Psoas muscle (tissue), 8 donors: ENCODE measurements at regions of chr22 and their contacts with region 1.

Region 1: DNA sequence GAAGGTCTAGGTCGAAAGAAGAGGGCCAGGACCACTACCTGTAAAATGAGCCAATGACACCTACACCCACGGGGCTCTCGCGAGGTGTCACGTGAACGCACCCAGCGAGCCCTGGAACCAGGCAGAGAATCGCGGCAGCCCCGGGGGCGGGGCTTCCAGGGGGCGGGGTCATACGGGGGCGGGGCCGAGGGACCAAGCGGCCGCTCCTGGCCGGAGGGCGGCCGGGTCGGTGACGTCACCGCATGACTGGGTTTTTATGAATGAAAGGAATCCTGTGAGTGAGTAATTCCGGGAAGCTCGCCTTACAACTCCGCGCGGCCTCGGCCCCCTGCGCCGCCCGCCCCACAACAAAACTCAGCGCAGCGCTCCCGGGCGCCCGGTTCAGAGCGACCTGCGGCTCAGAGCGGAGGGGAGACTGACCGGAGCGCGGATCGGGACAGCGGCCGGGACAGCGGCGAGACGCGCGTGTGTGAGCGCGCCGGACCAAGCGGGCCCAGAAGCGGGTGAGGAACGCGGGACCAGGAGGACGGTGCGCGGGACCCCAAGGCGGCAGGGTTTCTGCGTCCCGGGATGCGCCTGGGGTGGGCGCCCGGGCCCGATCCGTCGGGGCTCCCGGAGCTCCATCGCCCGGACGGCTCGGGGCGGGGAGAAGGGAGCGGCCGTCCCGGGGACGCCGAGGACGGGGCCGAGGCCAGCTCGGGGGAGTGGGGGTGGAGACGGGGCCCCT is at the start of gene MAFF:
- DNase-seq: peak; percentile 97 to 99
- ATAC-seq: peak; percentile 84 to 88 (median 86)
- H3K4me3 ChIP-seq: peak within 1 kb of the TSS; percentile 72
- H3K27ac ChIP-seq: peak within 1 kb of the TSS; percentile 95
- H3K4me1 ChIP-seq: peaks cover 22% of the 10 kb centered on the region
- H3K27me3 ChIP-seq: no peaks in the 10 kb centered on the region
- CTCF ChIP-seq: no peak
- total RNA-seq, gene MAFF: 5.7 to 63.8 (median 39.5) TPM

Region 2: GRCh38 chr22:38114484-38115398 is 87.1 kb before region 1 on chr22:
- intact Hi-C with region 1: loop called (anchors 10 kb)
- DNase-seq: peak; percentile 86 to 94
- ATAC-seq: peak; percentile 89 to 95 (median 90)
- H3K4me3 ChIP-seq: no peak overlapping the region
- H3K27ac ChIP-seq: no peak overlapping the region
- H3K4me1 ChIP-seq: no peaks in the 10 kb centered on the region
- H3K27me3 ChIP-seq: no peaks in the 10 kb centered on the region
- CTCF ChIP-seq: peak; percentile 88

Region 3: GRCh38 chr22:38135133-38135751 is 66.6 kb before region 1 on chr22:
- intact Hi-C with region 1: no loop called
- DNase-seq: no peak
- ATAC-seq: peak; percentile 27 to 82 (median 62)
- H3K4me3 ChIP-seq: no peak overlapping the region
- H3K27ac ChIP-seq: no peak overlapping the region
- H3K4me1 ChIP-seq: no peaks in the 10 kb centered on the region
- H3K27me3 ChIP-seq: no peaks in the 10 kb centered on the region
- CTCF ChIP-seq: no peak

Region 4: DNA sequence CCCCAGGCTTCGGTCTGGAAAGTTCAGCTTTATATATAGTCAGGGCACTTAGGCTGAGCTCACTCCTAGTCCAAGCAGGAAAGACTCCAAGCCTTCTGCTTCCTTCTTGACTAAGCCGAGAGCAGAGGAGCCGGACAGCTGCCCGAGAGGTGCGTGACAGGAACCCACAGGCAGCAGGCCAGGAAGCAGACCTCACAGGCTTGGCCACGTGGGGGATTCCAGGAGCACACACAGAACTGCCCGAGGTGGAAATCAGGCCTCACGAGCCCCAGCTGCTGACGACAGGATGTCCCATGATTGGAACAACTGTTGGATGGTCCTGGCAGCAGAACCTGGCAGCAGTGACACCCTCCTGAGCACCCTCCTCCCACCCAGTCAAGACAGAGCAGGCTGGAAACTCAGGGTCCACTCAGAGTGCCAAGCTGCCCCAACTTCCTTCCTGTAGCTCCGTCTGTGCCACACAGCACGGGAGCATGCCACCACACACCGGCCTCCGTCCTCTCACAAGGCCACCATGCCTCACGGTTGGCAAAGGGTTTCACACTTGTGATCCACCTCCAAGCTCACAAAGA is 25.6 kb before region 1 on chr22:
- intact Hi-C with region 1: loop called in 1 of 2 experiments (anchors 2 kb)
- DNase-seq: peak; percentile 90 to 97
- ATAC-seq: peak; percentile 75 to 82 (median 76)
- H3K4me3 ChIP-seq: no peak overlapping the region
- H3K27ac ChIP-seq: peak overlapping the region; percentile 99
- H3K4me1 ChIP-seq: peaks cover 80% of the 10 kb centered on the region
- H3K27me3 ChIP-seq: no peaks in the 10 kb centered on the region
- CTCF ChIP-seq: no peak

Region 5: GRCh38 chr22:38181453-38182247 is 20.2 kb before region 1 on chr22 and contains the start of gene PLA2G6:
- intact Hi-C with region 1: loop called in 1 of 2 experiments (anchors 2 kb)
- DNase-seq: peak; percentile 98 to 99
- ATAC-seq: peak; percentile 84 to 88 (median 86)
- H3K4me3 ChIP-seq: peak within 1 kb of the TSS; percentile 80
- H3K27ac ChIP-seq: peak within 1 kb of the TSS; percentile 99
- H3K4me1 ChIP-seq: peaks cover 55% of the 10 kb centered on the region
- H3K27me3 ChIP-seq: no peaks in the 10 kb centered on the region
- CTCF ChIP-seq: no peak
- total RNA-seq, gene PLA2G6: 8.5 to 17.4 (median 11.4) TPM

Region 6: GRCh38 chr22:38317122-38317994 is 115.5 kb after region 1 on chr22 and contains the start of gene CSNK1E:
- intact Hi-C with region 1: loop called in 1 of 2 experiments (anchors 2 kb)
- DNase-seq: peak; percentile 85 to 90
- ATAC-seq: peak; percentile 68 to 79 (median 74)
- H3K4me3 ChIP-seq: peak within 1 kb of the TSS; percentile 76
- H3K27ac ChIP-seq: peak within 1 kb of the TSS; percentile 96
- H3K4me1 ChIP-seq: peaks cover 31% of the 10 kb centered on the region
- H3K27me3 ChIP-seq: no peaks in the 10 kb centered on the region
- CTCF ChIP-seq: no peak
- total RNA-seq, gene CSNK1E: 41.4 to 61.8 (median 49.0) TPM